Cardiac septum (tissue), 1 donor: ENCODE measurements at regions of chr6 and their contacts with region 1.

Region 1: GRCh38 chr6:39302669-39303424 is 11.4 kb downstream of the KCNK17 start:
- DNase-seq: peak; percentile 85

Region 2: DNA sequence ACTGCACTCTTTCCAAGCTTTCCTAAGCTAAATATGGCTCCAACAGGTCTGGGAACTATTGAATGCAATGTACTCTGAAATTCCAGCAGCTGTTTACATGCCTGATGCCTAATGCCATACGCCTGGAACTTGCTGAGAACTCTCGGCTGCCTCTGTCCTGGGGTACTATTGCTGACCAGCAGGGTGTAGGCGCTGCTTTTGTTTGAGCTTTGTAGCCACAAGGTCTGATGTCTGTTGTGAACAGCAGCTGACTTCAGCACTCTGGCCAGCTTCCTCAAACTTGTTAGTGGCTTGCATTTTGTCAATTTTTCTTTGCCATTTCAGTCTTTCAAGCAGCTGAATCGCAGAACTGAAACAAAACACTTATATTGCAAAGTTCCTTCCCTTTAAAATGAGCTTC is 214.5 kb before region 1 on chr6:
- intact Hi-C with region 1: loop called (anchors 2 kb)
- DNase-seq: no peak

Region 3: GRCh38 chr6:39166189-39166911 is 136.5 kb before region 1 on chr6:
- intact Hi-C with region 1: loop called (anchors 5 kb)
- DNase-seq: peak; percentile 89

Region 4: GRCh38 chr6:40807484-40807883 is 1504.6 kb after region 1 on chr6:
- intact Hi-C with region 1: no loop called
- DNase-seq: no peak